CD14-positive monocyte (primary cell): ENCODE measurements at regions of chr12 and their contacts with region 1.

Region 1: DNA sequence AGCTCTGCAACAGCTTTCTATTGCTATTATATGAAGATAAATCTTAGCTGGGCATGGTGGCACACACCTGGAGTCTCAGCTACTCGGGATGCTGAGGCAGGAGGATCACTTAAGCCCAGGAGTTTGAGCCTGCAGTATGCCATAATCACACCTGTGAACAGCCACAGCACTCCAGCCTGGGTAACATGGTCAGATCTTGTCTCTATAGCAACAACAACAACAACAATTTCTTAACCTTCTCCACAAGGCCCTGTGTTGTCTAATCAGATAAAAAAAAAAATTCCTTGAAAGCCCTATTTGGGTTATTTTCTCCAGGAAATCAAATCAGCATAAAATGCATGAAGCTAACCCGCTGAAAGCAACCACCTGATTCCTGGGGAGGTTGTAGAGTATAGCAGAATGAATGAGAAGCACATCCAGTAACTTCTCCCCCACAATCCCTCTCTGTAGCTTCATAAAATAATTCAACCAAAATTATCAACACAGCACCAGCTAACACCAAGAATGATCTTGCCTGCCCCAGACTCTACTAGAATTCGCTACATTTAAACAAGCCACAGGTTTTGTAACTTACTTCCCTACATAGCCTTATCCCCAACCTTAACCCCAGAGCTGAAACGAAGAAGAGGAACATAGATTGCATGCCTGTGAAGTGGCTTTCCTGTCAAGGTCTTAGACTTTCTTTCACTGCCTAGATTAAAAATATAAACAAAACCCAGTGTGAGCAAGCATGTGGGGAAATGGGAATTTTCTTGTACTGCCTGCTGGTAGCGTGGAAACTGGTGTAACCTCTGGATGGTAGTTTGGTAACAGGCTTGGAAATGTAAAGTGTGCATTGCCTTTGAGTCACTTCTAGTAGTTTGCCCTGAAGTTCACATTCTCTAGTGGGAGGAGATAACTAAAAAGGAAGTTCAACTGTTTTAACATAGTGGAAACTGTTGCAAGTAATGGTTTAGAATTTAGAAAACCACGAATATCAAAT is 6.0 kb upstream of the STK38L start:
- DNase-seq: peak; percentile 82 to 95 (median 92)
- H3K4me3 ChIP-seq: peak overlapping the region in 2 of 3 experiments; percentile 44 to 70
- H3K4me3 Mint-ChIP-seq: peak overlapping the region; percentile 55 to 80
- H3K27ac ChIP-seq: peak overlapping the region; percentile 67 to 84
- H3K27ac Mint-ChIP-seq: peak overlapping the region; percentile 88 to 96 (median 94)
- H3K4me1 ChIP-seq: peaks cover 37 to 50% of the 10 kb centered on the region in 2 donors
- H3K4me1 Mint-ChIP-seq: peaks cover 46% of the 10 kb centered on the region
- H3K27me3 ChIP-seq: no peaks in the 10 kb centered on the region
- H3K27me3 Mint-ChIP-seq: peaks cover 0 to 1% (median 0%) of the 10 kb centered on the region in 3 donors
- CTCF ChIP-seq: no peak

Region 2: DNA sequence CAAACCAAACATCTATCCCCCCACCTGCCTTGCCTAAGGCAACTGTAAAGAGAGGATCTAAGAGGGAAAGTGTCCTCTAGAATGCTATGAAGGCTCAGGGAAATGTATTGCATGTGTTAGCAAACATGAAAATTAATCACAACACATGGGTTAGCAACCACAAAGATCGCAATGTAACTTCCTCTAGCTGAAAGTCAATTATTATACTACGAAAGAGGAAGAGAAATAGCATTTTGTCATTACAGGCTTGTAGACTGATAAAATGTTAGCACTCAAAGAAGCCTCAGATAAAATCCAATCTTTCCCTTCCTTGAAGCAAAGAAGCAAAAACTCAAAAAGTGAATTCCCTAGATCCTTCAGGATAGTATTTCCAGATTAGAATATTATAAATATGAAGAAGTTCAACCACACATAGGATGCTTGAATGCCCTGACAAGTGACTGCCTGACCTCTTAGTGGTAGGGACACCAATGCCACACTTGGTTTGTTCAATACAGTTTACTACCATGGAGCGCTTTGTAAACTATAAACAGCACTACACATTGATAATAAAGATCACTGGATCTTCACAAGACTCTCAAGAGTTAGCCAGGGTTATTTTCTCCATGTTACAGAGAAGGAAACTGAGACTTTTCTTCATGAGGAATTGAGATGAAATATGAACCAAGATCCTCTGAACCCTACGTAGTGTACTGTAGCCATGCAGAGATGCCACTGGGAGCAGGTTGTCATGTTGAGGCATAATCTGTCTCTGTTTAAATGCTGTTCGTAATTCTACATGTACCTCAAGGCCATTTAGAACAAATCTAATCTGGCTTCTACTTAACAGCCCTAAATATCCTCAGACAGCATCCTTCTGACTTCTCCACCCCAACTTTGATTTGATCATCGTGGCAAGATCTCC is 505.8 kb before region 1 on chr12:
- intact Hi-C with region 1: no loop called
- DNase-seq: peak; percentile 56 to 74 (median 61)
- H3K4me3 ChIP-seq: peak overlapping the region in 1 of 3 experiments; percentile 24
- H3K4me3 Mint-ChIP-seq: peak overlapping the region in 1 of 2 donors; percentile 21
- H3K27ac ChIP-seq: peak overlapping the region in 1 of 2 donors; percentile 57
- H3K27ac Mint-ChIP-seq: peak overlapping the region; percentile 8 to 80 (median 66)
- H3K4me1 ChIP-seq: peaks cover 33 to 50% of the 10 kb centered on the region in 2 donors
- H3K4me1 Mint-ChIP-seq: peaks cover 50% of the 10 kb centered on the region
- H3K27me3 ChIP-seq: no peaks in the 10 kb centered on the region
- H3K27me3 Mint-ChIP-seq: peaks cover 0 to 3% (median 0%) of the 10 kb centered on the region in 3 donors
- CTCF ChIP-seq: no peak

Region 3: GRCh38 chr12:27024291-27024690 is 213.8 kb before region 1 on chr12:
- intact Hi-C with region 1: loop called in 1 of 2 experiments (anchors 10 kb)
- DNase-seq: no peak
- H3K4me3 ChIP-seq: no peak overlapping the region
- H3K4me3 Mint-ChIP-seq: no peak overlapping the region
- H3K27ac ChIP-seq: no peak overlapping the region
- H3K27ac Mint-ChIP-seq: no peak overlapping the region
- H3K4me1 ChIP-seq: peaks cover 18 to 26% of the 10 kb centered on the region in 2 donors
- H3K4me1 Mint-ChIP-seq: peaks cover 39% of the 10 kb centered on the region
- H3K27me3 ChIP-seq: no peaks in the 10 kb centered on the region
- H3K27me3 Mint-ChIP-seq: peaks cover 0 to 7% (median 0%) of the 10 kb centered on the region in 3 donors
- CTCF ChIP-seq: no peak